Heart right ventricle (tissue), 16 donors: ENCODE measurements at regions of chr5 and their contacts with region 1.

Region 1: GRCh38 chr5:147188200-147189108 is 46.4 kb upstream of the STK32A start:
- DNase-seq: peak in 1 of 2 donors; percentile 59
- ATAC-seq: peak in 5 of 8 donors; percentile 46 to 76 (median 63)
- H3K4me3 ChIP-seq: no peak overlapping the region
- H3K27ac ChIP-seq: no peak overlapping the region
- H3K4me1 ChIP-seq: peaks cover 0 to 4% (median 0%) of the 10 kb centered on the region in 9 donors
- H3K27me3 ChIP-seq: peaks cover 0 to 16% (median 3%) of the 10 kb centered on the region in 7 donors
- CTCF ChIP-seq: peak; percentile 72 to 93 (median 86)

Region 2: DNA sequence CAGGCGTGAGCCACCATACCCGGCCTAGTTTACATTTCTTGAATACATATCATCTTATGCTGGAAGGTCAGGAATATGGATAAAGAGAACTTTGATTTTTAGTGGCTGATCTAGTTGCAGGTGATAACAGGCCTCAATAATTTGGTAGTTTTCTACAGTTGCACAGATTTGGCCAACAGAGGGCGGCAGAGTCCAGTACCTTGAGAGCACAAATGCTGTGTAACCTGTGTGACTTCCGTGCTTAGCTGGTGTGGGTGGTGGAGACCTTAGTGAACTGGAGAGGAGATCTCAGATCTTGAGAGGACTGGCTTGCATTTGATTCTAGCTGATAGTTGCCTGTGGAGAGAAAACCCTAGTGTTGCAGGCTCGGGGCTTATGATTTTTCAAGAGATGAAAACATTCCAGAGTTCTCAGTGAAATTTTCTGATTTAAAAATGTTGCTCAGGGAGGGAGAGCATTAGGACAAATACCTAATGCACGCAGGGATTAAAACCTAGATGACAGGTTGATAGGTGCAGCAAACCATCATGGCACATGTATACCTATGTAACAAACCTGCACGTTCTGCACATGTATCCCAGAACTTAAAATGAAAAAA is 655.1 kb before region 1 on chr5:
- intact Hi-C with region 1: loop called in 4 of 10 experiments (anchors 2 to 10 kb)
- DNase-seq: peak; percentile 26 to 31
- ATAC-seq: peak in 3 of 8 donors; percentile 22 to 73 (median 51)
- H3K4me3 ChIP-seq: no peak overlapping the region
- H3K27ac ChIP-seq: no peak overlapping the region
- H3K4me1 ChIP-seq: no peaks in the 10 kb centered on the region
- H3K27me3 ChIP-seq: peaks cover 0 to 3% (median 0%) of the 10 kb centered on the region in 7 donors
- CTCF ChIP-seq: peak; percentile 51 to 82 (median 73)

Region 3: DNA sequence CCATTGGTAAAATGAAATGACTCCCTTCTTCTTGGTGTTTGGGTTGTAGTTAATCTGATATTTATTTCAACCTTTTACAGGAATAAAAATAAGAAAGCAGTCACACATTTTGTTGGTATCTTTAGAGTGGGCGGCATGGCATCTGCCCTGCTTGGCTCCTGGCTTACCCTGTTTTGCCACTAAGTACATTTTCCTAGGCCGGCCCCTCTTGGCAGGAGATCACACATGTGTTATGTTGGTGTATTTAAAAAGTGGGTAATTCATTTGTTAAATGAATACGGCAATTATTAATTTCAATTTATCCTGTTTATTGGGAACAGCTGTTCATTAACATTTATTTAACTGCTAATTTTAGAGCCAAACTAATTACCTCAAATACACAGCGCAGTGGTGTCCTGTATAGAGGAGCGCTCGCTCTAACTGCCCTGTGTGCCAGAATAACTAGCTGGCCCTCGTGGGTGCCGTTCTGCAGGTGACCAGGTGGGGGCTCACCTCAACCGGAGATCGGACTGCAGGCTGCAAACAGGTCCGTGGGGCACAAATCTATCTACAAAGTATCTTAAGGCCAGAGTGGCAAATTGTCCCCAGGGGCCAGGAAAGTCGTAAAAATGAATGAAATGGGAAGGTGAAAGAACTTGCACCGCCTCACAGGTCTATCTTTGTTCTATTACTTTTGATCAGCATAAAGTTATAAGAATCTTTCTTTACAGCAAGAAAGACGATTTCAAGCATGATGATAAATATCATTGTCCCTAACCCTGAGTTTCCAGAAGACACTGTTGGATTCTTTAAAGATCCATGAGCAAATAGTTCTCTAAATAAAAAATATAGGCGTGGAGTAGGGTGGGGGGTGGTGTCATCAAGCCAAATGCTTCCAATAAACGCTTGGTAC is 646.2 kb before region 1 on chr5:
- intact Hi-C with region 1: loop called in 8 of 10 experiments (anchors 2 to 10 kb)
- DNase-seq: peak; percentile 55 to 59
- ATAC-seq: peak in 7 of 8 donors; percentile 49 to 85 (median 76)
- H3K4me3 ChIP-seq: no peak overlapping the region
- H3K27ac ChIP-seq: no peak overlapping the region
- H3K4me1 ChIP-seq: no peaks in the 10 kb centered on the region
- H3K27me3 ChIP-seq: peaks cover 0 to 5% (median 0%) of the 10 kb centered on the region in 7 donors
- CTCF ChIP-seq: peak; percentile 46 to 82 (median 76)

Region 4: GRCh38 chr5:146653560-146653959 is 534.9 kb before region 1 on chr5:
- intact Hi-C with region 1: no loop called
- DNase-seq: no peak
- ATAC-seq: no peak
- H3K4me3 ChIP-seq: no peak overlapping the region
- H3K27ac ChIP-seq: no peak overlapping the region
- H3K4me1 ChIP-seq: no peaks in the 10 kb centered on the region
- H3K27me3 ChIP-seq: no peaks in the 10 kb centered on the region
- CTCF ChIP-seq: no peak

Region 5: DNA sequence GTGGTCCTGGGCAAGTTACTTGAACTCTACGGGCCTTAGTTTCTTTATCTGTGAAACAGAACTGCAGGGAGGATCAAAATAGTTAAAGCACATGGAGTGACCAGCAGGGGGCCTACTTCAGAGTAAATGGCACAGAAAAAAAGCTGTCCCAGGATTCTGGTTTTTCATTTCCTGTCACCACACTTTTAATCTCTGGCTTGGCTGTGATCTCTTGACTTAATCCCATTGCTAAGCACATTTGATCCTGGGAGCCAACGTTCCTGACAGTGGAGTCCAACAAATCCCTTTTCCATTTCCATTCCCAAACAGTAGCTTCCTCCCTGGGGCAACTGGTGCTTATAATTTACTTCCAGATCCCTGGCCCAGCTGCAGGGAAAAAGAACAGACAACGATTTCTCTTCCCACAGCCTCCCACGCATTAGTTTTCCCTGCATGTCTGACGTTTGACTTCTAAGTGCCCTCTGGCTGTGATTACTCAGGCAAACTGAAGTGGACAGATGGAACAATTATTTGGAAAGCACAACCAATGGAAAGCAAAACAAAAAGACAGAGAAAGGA is 90.1 kb before region 1 on chr5:
- intact Hi-C with region 1: loop called in 4 of 10 experiments (anchors 10 kb)
- DNase-seq: peak in 1 of 2 donors; percentile 41
- ATAC-seq: peak; percentile 34 to 89 (median 62)
- H3K4me3 ChIP-seq: no peak overlapping the region
- H3K27ac ChIP-seq: no peak overlapping the region
- H3K4me1 ChIP-seq: peaks cover 0 to 12% (median 0%) of the 10 kb centered on the region in 9 donors
- H3K27me3 ChIP-seq: peaks cover 0 to 11% (median 0%) of the 10 kb centered on the region in 7 donors
- CTCF ChIP-seq: peak; percentile 15 to 63 (median 46)

Region 6: GRCh38 chr5:147160902-147161700 is 27.4 kb before region 1 on chr5:
- intact Hi-C with region 1: loop called in 1 of 10 experiments (anchors 1 kb)
- DNase-seq: no peak
- ATAC-seq: peak in 2 of 8 donors; percentile 20 to 55
- H3K4me3 ChIP-seq: no peak overlapping the region
- H3K27ac ChIP-seq: no peak overlapping the region
- H3K4me1 ChIP-seq: peaks cover 0 to 7% (median 0%) of the 10 kb centered on the region in 9 donors
- H3K27me3 ChIP-seq: no peaks in the 10 kb centered on the region
- CTCF ChIP-seq: no peak

Region 7: DNA sequence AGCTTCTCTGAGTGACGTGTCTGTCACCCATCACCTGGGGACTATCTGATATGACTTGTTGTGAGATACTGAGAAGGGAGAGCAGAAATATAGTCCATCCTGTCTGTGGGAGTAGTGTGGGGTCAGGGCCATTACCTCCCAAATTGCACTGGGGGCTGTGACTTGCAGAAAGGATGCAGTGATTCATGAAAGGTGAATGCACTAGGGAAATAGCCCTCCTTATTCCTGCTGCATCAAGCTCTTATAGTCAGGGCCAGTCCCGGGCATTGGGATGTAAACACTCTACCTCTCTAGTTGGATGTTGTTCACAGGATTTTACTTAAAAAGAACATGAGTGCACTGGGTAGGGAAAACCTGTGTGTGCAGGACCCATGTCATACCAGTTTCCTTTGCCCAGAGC is 171.1 kb after region 1 on chr5:
- intact Hi-C with region 1: no loop called
- DNase-seq: no peak
- ATAC-seq: no peak
- H3K4me3 ChIP-seq: no peak overlapping the region
- H3K27ac ChIP-seq: no peak overlapping the region
- H3K4me1 ChIP-seq: no peaks in the 10 kb centered on the region
- H3K27me3 ChIP-seq: no peaks in the 10 kb centered on the region
- CTCF ChIP-seq: no peak